ENCODE measurements at regions of chr5 and their contacts with region 1.

Region 1: DNA sequence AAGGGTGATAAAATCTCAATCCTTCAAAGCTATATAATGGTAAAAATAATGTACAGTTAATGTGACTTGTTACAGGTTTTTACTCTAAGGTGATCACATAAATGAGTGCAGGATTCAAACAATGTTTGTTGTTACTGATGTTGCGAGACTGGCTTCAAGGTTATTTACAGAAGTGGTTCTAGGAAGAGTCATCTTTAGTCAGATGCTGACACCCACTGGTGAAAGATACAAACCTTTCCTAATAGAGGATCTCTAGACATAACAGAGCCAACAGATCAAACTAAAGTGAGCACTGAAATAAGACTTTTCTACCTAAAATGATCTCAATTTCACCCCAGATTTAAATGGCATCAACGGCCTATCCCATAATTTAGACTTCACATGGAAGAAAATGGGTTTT is 20.2 kb downstream of the ARSB start:
- DNase-seq: peak; percentile 44
- CTCF ChIP-seq: peak; percentile 58

Region 2: GRCh38 chr5:78984439-78985115 is 19.7 kb after region 1 on chr5:
- CTCF ChIA-PET with region 1: interaction called, 10 read pairs
- POLR2A ChIA-PET with region 1: no interaction called
- DNase-seq: peak; percentile 92
- CTCF ChIP-seq: peak; percentile 11

Region 3: DNA sequence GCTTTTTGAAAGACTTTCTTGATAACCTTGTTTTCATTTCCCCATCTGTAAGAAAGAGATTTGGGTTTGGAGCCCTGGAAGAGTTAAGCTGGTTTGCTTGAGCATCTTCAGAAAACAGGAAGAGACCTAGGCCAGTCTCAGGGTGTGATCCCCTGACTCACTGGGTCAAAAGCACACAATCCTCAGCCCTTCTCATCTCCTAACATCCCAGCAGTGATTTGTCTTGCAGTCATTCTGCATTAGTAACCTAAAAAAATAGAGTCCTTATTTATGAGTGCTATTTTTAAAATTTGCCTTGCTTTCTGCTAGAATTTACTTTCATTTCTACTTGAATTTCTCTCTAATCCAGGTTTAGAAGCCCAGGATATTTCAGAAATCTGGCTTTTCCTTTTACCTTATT is 36.6 kb after region 1 on chr5:
- CTCF ChIA-PET with region 1: no interaction called
- POLR2A ChIA-PET with region 1: no interaction called
- DNase-seq: no peak
- CTCF ChIP-seq: no peak

Measured in GM10248 (cell line).